CD8-positive, alpha-beta T cell (primary cell): ENCODE measurements at regions of chr6 and their contacts with region 1.

Region 1: GRCh38 chr6:15722731-15723130 is 59.9 kb upstream of the DTNBP1 start:
- DNase-seq: no peak
- ATAC-seq: no peak
- H3K4me3 ChIP-seq: no peak overlapping the region
- H3K4me3 Mint-ChIP-seq: no peak overlapping the region
- H3K27ac ChIP-seq: no peak overlapping the region
- H3K27ac Mint-ChIP-seq: no peak overlapping the region
- H3K4me1 ChIP-seq: no peaks in the 10 kb centered on the region
- H3K4me1 Mint-ChIP-seq: peaks cover 4% of the 10 kb centered on the region
- H3K27me3 ChIP-seq: no peaks in the 10 kb centered on the region
- H3K27me3 Mint-ChIP-seq: no peaks in the 10 kb centered on the region
- CTCF ChIP-seq: no peak

Region 2: DNA sequence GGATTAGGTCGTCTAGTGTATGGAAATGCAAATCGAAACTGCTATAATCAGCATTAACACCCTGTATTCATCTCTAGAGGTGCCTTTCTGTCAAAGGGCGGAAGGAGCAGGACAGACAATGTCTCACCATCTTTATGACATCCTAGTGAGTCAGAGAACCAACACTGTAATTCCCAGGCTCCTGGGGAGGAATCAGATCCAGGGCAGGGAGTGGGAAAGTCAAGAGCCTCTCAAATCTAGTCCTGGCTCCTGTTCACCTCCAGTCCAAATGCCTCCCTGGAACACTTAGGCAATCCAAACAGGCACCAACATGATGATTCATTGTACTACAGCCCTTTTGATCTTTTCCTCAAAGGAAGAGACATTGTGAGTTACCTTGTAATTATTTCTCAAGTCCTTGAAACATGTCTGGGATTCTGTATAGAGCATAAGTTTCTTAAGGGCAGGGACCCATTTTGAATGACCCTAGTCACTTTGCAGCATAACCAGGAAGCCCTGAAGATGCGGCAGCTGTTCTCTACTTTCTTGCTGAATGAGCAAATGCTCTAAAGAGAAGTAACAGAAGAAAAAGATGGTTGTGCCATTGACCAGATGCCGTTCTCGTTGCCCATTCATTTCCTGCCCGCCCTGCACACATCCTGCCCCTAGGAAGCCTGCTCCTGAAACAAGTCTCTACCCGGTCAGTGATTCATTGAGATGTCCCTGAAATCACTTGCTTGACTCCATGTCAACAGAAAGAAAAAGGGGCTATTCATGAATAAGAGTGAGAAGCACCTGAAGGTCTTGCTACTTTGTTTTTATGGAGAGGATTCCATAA is 589.7 kb before region 1 on chr6:
- CTCF ChIA-PET with region 1: no interaction called
- POLR2A ChIA-PET with region 1: no interaction called
- intact Hi-C with region 1: no loop called
- DNase-seq: no peak
- ATAC-seq: no peak
- H3K4me3 ChIP-seq: no peak overlapping the region
- H3K4me3 Mint-ChIP-seq: no peak overlapping the region
- H3K27ac ChIP-seq: no peak overlapping the region
- H3K27ac Mint-ChIP-seq: no peak overlapping the region
- H3K4me1 ChIP-seq: no peaks in the 10 kb centered on the region
- H3K4me1 Mint-ChIP-seq: no peaks in the 10 kb centered on the region
- H3K27me3 ChIP-seq: no peaks in the 10 kb centered on the region
- H3K27me3 Mint-ChIP-seq: no peaks in the 10 kb centered on the region
- CTCF ChIP-seq: no peak

Region 3: GRCh38 chr6:16089232-16090062 is 366.7 kb after region 1 on chr6:
- CTCF ChIA-PET with region 1: no interaction called
- POLR2A ChIA-PET with region 1: no interaction called
- intact Hi-C with region 1: loop called in 1 of 2 experiments (anchors 10 kb)
- DNase-seq: no peak
- ATAC-seq: no peak
- H3K4me3 ChIP-seq: no peak overlapping the region
- H3K4me3 Mint-ChIP-seq: no peak overlapping the region
- H3K27ac ChIP-seq: no peak overlapping the region
- H3K27ac Mint-ChIP-seq: no peak overlapping the region
- H3K4me1 ChIP-seq: no peaks in the 10 kb centered on the region
- H3K4me1 Mint-ChIP-seq: no peaks in the 10 kb centered on the region
- H3K27me3 ChIP-seq: no peaks in the 10 kb centered on the region
- H3K27me3 Mint-ChIP-seq: peaks cover 5% of the 10 kb centered on the region
- CTCF ChIP-seq: no peak